Activated CD4-positive, alpha-beta T cell treated with anti-CD3 and anti-CD28 coated beads, Interleukin-2, amount 10 ng/mL, durations not matched to agents 24 days and 14 days (primary cell): ENCODE measurements at regions of chr14 and their contacts with region 1.

Region 1: DNA sequence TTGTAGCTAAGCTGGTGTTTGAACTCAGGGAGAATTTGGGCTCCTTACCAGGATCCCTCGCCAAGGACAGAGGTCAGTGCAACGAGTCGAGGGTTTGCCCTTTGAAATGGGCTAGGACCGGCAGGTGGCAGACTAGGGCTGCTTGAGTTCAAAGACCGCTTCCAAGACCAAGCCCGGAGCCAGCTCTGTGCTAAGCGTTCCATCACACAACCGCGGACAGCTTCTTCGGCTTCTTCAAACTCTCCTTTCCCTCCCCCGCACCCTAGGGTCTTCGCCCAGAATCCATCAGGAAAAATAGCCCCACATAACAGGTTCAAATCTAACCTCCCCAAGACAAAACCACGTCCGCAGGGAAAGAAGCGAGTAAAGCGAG is 705 bp upstream of the FLVCR2 start:
- DNase-seq: peak; percentile 91
- H3K4me3 Mint-ChIP-seq: peak overlapping the region; percentile 90
- H3K27ac Mint-ChIP-seq: peak overlapping the region; percentile 85
- H3K4me1 Mint-ChIP-seq: peaks cover 19% of the 10 kb centered on the region
- H3K27me3 Mint-ChIP-seq: peaks cover 3% of the 10 kb centered on the region

Region 2: DNA sequence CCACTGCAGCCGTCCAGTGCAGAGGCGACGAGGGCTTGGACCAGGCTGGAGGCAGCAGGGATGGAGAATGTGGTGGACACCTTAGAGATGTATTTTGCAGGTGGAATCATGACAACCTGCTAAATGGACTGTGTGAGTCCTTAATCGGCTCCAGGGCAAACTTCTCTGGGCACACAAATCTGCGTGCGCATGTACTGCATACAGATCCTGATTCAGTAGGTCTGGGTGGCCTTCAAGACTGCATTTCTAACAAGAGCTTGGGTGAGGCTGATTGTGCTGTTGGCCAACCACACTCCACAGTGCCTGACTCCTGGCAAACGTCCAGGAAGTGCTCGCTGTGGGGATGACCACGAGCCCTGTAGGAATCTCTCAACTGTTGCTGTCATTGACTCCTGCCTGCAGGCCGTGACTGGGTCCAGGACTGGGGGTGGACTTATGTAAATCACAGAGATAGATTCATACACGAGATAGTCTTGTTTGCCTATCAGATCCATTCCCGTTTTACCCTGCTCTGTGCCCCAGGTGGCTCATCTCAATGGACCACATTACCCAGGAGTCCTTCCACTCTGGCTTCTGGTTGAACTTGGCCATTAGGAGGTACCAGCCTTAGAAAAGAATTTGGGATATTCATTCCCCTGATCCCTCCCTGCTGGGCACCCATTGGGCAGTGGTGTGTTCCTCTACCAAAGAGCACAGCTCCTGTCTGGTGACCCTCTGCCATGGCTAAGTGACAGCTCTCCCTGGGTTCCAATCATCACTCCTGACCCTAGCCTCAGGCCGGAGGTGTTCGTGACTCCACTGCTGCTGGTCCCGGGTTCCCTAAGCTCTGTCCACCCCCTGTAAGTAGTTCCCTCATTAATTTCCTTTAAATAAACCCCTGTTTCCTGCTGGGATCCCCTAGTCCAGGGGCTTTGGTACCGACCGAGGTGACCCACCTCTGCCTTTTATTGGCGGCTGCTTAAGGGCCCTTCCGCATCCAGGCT is 122.5 kb before region 1 on chr14:
- intact Hi-C with region 1: no loop called
- DNase-seq: no peak
- H3K4me3 Mint-ChIP-seq: no peak overlapping the region
- H3K27ac Mint-ChIP-seq: no peak overlapping the region
- H3K4me1 Mint-ChIP-seq: peaks cover 5% of the 10 kb centered on the region
- H3K27me3 Mint-ChIP-seq: no peaks in the 10 kb centered on the region

Region 3: GRCh38 chr14:75566321-75566720 is 11.4 kb before region 1 on chr14:
- intact Hi-C with region 1: loop called (anchors 1 kb)
- DNase-seq: peak; percentile 90
- H3K4me3 Mint-ChIP-seq: peak overlapping the region; percentile 50
- H3K27ac Mint-ChIP-seq: peak overlapping the region; percentile 89
- H3K4me1 Mint-ChIP-seq: peaks cover 53% of the 10 kb centered on the region
- H3K27me3 Mint-ChIP-seq: no peaks in the 10 kb centered on the region

Region 4: DNA sequence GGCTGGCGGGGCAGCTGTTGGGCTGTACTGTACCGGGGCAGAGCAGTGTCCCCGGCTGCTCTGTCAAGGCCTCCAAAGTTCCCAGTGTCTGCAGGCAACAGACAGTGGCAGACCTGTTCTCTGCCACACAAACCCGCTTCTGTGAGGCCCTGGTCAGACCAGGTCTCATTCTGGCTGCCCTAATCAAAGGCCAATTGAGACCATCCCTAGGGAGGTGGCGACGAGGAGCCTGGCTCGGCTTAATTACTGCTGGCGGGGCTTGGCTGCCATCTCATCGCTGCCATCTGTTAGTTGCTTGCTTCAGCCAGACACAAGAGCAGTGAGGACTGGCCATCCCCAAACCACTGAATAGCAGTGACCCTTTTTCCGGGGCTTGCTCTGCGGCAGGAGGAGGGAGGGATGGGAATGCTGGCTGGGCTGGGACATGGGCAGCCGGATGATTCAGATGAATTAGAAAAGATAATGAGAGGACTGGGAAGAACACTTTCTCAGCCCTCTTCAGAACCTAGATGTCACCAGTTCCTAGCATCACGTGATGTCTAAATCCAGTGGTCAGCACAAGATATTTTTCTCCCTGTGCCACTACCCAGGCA is 58.5 kb after region 1 on chr14:
- intact Hi-C with region 1: no loop called
- DNase-seq: no peak
- H3K4me3 Mint-ChIP-seq: no peak overlapping the region
- H3K27ac Mint-ChIP-seq: no peak overlapping the region
- H3K4me1 Mint-ChIP-seq: no peaks in the 10 kb centered on the region
- H3K27me3 Mint-ChIP-seq: no peaks in the 10 kb centered on the region

Region 5: GRCh38 chr14:75654127-75654732 is 76.5 kb after region 1 on chr14:
- intact Hi-C with region 1: loop called (anchors 1 kb)
- DNase-seq: peak; percentile 95
- H3K4me3 Mint-ChIP-seq: no peak overlapping the region
- H3K27ac Mint-ChIP-seq: no peak overlapping the region
- H3K4me1 Mint-ChIP-seq: peaks cover 6% of the 10 kb centered on the region
- H3K27me3 Mint-ChIP-seq: no peaks in the 10 kb centered on the region